ENCODE measurements at regions of chr10 and their contacts with region 1.

Region 1: DNA sequence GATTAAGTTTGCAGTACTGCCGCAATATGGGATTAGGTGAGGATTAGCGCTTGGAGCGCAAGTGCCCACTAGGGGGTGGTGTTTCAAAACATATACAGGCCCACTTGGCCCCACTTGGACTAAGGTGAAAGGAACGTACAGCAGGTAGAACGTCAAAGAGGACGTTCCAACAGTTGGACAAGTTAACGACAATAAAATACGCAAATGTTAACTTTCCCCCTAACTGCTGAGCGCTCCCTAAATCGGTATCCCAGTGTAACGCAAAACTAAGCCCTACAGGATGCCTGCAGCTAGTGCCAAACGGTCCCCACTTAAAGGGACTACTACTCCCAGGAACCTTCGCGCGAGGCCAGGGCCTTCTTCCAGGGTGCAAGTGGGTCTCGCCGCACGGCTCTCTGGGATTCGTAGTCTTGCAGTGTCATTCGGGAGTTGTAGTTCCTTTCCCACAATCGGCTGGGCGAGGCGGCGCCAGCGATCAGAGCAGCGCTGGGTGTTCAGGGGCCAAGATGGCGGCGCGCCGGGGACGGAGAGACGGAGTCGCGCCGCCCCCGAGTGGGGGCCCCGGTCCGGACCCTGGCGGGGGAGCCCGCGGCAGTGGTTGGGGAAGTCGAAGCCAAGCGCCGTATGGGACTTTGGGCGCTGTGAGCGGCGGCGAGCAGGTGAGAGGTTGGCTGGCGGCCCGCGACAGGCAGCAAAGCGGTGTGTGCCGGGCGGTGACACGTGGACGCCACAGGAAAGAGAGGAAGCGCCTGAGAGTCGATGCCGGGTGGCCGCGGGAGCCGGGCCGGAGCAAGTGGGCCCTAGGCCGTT is at the start of gene PPRC1:
- DNase-seq: peak; percentile 97
- H3K4me3 ChIP-seq: peak within 1 kb of the TSS; percentile 96
- H3K27me3 ChIP-seq: no peaks in the 10 kb centered on the region
- CTCF ChIP-seq: peak; percentile 92
- polyA plus RNA-seq, gene PPRC1: 11.0 and 17.3 TPM in 2 replicates

Region 2: DNA sequence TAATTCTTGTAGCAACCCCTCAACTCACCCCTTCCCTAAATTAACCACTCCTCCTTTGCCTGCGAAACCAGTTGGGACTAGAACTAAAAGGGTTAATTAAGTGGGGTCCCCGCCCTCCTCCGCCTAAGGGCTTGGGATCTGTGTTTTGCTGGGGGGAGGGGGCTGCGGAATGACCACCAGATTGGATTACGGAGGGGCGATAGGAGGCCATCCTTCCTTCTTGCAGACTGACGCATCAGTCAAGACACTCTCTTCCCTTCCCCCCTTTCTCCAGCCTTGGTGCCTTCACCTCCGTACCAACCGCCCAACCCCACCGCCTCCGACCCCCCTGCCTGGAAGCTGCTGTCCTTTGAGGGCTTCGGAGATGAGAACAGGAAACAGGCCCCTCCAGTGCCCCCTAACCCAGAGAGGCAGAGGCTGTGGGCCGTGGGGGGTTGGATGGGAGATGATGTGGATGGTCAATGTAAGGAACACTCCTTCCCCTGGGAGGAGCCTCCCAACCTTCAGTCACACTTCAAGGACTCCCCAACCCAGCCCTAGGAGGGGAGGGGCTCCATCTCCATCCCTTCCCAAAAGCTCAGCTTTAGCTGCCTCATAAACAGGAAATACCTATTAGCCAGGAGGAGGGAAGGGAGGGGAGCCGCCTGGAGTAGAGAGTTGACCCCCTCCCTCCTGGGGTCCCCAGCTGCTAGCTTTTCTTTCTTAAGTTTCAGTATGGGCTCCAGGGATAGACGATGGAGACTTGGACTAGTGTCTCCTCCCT is 11.6 kb before region 1 on chr10:
- CTCF ChIA-PET with region 1: interaction called, 19 read pairs
- POLR2A ChIA-PET with region 1: no interaction called
- DNase-seq: no peak
- H3K4me3 ChIP-seq: peak overlapping the region; percentile 97
- H3K27me3 ChIP-seq: no peaks in the 10 kb centered on the region
- CTCF ChIP-seq: no peak

Measured in BJ (cell line).